Caco-2 (cell line): ENCODE measurements at regions of chr12 and their contacts with region 1.

Region 1: DNA sequence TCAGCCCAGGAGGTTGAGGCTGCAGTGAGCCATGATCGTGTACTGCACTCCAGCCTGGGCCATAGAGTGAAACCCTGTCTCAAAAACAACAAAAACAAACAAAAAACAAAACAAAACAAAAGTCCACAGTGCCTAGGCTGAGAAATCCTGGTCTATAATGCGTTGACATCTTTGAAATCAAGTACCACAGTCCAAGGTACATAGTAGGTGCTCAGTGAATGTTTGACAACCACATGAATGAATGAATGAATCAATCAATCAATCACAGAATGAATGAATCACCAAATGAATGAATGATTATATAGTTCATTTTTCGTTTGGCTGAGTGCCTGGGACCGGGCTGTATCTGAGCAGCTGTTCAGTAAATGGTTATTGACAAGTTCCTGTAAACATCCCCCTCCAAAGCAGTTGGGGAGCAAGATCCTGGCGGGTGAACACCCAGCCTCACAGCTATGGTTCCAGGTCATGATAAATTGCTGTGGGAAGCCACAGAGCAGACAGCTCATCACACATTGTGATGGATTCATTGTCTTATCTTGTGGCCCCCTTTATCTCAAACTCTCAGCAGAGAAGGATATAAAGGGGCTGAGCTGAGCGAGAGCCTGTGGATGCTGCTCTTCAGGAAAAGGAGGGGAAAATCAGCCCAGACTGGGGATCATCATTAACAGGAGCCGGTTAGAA is 30.4 kb upstream of the IFT81 start:
- DNase-seq: no peak
- H3K4me3 ChIP-seq: no peak overlapping the region
- H3K4me3 Mint-ChIP-seq: no peak overlapping the region
- H3K27ac Mint-ChIP-seq: no peak overlapping the region
- H3K4me1 ChIP-seq: peaks cover 12% of the 10 kb centered on the region
- H3K4me1 Mint-ChIP-seq: no peaks in the 10 kb centered on the region
- H3K27me3 ChIP-seq: no peaks in the 10 kb centered on the region
- H3K27me3 Mint-ChIP-seq: no peaks in the 10 kb centered on the region
- CTCF ChIP-seq: no peak

Region 2: DNA sequence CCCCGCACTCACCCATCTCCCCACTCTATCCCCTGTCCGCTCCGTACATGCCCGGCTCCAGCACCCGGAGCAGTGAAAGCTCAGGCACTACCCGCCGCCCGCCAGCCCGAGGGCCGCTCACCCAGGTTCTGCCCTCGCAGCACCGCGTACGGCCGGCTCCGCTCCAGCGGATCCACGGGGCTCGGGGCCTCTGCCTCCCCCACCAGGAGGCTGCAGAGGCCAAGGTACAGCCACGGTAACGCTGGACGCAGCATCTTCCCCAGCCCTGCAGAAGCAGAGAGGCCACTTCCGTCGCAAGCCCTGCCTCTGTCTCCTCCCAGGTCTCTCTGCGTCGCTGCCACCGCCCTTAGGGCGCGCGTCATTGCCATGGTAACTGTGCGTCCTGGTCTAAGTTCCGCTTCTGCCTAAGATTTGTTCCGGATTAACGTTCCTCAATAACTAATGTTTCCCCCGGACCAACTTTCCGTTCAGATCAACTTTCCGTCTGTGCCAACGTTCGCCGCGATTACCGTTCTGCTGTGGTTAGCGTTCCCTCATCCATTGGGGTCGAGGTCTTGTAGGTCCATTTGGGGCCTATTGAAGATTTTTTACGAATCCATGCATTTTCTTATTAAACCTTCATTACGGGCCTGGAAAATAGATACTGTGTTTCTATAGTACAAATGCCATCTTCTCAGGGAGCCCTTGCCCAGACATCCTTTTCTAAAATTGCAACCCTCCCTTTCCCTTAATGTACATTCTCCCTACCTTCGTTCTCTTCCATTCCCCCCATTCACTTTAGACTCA is 45.3 kb before region 1 on chr12 and contains the start of gene C12orf76:
- CTCF ChIA-PET with region 1: no interaction called
- POLR2A ChIA-PET with region 1: no interaction called
- intact Hi-C with region 1: loop called (anchors 5 kb)
- DNase-seq: peak; percentile 89 to 92
- H3K4me3 ChIP-seq: peak within 1 kb of the TSS; percentile 91
- H3K4me3 Mint-ChIP-seq: peak within 1 kb of the TSS; percentile 82
- H3K27ac Mint-ChIP-seq: peak within 1 kb of the TSS; percentile 82
- H3K4me1 ChIP-seq: peaks cover 22% of the 10 kb centered on the region
- H3K4me1 Mint-ChIP-seq: peaks cover 8% of the 10 kb centered on the region
- H3K27me3 ChIP-seq: no peaks in the 10 kb centered on the region
- H3K27me3 Mint-ChIP-seq: no peaks in the 10 kb centered on the region
- CTCF ChIP-seq: peak in 1 of 2 experiments; percentile 8
- total RNA-seq, gene C12orf76: 10.8 and 11.9 TPM in 2 replicates